ENCODE measurements at regions of chr15 and their contacts with region 1.

Region 1: DNA sequence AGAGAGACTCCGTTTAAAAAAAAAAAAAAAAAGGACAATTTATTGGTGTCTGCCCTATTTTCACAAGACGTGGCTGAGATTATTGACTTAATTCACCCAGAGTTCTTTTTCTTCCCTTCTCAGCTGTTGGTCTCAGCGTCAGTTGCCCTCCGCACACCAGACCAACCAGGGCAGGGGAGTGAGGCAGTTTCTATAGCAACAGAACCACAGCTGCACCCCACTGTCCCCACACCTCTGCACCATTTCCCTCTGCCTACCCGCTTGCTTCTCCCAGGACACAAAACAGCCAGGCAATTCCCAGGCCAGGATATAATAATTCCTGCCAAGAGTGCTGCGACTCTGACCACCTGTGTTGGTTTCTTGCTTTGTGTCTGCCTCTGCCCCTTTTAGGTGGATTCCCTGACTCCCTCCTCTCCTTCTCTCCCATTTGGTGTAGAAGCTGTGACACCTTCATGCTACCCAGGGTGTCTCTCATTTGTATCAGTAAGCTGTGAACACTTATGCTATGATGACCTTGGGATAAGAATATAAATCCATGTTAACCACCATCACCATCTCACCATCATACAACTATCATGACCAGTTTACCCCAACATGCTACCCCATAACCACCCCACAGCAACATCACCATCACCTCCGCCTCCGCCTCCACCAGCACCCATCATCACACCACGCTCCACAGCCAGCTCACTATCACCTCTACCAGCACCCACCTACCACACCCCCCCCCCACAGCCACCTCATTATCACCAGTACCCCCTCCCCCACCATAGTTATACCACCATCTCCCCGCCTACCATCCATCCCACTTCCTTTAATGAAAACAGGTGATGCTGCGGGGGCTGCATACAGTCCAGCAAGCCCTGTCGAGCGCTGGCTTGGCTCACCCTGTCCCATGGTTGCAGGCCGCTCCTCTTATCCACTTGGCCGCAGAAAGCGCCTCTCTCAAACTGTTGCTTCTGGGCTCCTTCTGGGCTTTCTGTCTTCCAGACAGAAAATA is 589 bp downstream of the EPB42 start:
- DNase-seq: no peak
- H3K4me3 ChIP-seq: no peak overlapping the region
- H3K27ac ChIP-seq: no peak overlapping the region
- H3K4me1 ChIP-seq: peaks cover 13% of the 10 kb centered on the region
- H3K27me3 ChIP-seq: no peaks in the 10 kb centered on the region
- CTCF ChIP-seq: no peak

Region 2: GRCh38 chr15:42863572-42864239 is 356.5 kb before region 1 on chr15:
- CTCF ChIA-PET with region 1: no interaction called
- dilution Hi-C with region 1: no loop called
- in situ Hi-C with region 1: no loop called
- intact Hi-C with region 1: no loop called
- DNase-seq: no peak
- H3K4me3 ChIP-seq: no peak overlapping the region
- H3K27ac ChIP-seq: no peak overlapping the region
- H3K4me1 ChIP-seq: peaks cover 11% of the 10 kb centered on the region
- H3K27me3 ChIP-seq: no peaks in the 10 kb centered on the region
- CTCF ChIP-seq: no peak

Region 3: DNA sequence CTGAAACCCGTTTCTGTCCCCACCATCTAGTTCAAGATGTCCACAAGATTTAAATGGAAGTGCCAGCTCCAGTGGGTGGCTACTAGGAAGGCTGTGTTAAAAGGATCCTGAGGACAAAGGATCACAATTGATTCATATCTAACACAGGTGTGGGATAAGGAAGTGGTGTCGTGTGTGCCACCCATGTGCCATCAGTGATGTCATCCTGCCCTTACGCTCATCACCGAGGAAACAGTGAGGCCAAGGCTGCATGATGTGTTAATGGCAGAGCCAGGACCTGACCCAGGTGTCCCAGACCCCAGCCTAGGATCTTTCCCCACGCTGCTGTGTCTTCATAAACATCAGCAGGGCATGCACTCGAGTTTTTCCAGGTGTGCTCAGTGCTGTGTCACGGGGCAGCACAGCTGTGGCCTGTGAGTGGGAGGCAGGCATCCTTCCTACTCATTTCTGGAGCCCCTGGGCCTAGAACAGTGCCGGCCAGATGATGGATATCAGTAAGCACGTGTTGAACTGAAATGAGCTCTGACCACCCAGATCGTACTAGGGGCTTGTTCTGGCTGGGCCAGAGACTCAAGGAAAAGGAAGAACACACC is 57.1 kb after region 1 on chr15:
- CTCF ChIA-PET with region 1: interaction called, 3 read pairs
- dilution Hi-C with region 1: no loop called
- in situ Hi-C with region 1: loop called in 1 of 2 experiments (anchors 5 kb)
- intact Hi-C with region 1: no loop called
- DNase-seq: no peak
- H3K4me3 ChIP-seq: no peak overlapping the region
- H3K27ac ChIP-seq: no peak overlapping the region
- H3K4me1 ChIP-seq: peaks cover 2% of the 10 kb centered on the region
- H3K27me3 ChIP-seq: peaks cover 3% of the 10 kb centered on the region
- CTCF ChIP-seq: no peak

Region 4: GRCh38 chr15:43285609-43286037 is 65.4 kb after region 1 on chr15:
- CTCF ChIA-PET with region 1: interaction called, 23 read pairs
- dilution Hi-C with region 1: no loop called
- in situ Hi-C with region 1: loop called in 1 of 2 experiments (anchors 5 kb)
- intact Hi-C with region 1: loop called (anchors 1 kb)
- DNase-seq: peak; percentile 46
- H3K4me3 ChIP-seq: no peak overlapping the region
- H3K27ac ChIP-seq: no peak overlapping the region
- H3K4me1 ChIP-seq: no peaks in the 10 kb centered on the region
- H3K27me3 ChIP-seq: no peaks in the 10 kb centered on the region
- CTCF ChIP-seq: peak; percentile 78 to 88

Measured in mammary epithelial cell (primary cell).